ENCODE measurements at regions of chr9 and their contacts with region 1.

Region 1: DNA sequence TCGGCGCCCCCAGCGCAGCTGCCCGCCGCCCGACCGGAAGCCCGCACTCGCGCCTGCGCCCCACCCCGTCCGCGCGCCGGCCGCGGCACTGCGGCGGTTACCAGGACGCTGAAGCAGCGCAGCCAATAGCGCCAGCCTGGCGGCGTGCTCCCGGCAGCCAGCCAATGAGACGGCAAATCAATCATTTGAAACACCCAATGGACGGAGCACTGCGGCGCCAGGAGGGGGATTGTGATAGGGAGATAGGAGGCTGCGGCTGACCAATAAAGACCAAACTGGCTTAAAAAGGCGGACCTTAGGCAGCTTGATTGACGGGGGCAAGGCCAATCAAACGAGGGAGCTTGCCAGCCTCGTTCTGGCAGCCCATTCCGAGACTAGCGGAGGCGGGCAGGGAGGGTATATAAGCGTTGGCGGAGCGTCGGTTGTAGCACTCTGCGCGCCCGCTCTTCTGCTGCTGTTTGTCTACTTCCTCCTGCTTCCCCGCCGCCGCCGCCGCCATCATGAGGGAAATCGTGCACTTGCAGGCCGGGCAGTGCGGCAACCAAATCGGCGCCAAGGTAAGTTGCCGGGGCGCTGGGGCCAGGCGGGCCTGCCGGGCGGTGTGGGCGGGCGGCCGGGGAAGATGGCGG is at the start of gene TUBB4B:
- DNase-seq: peak; percentile 99
- H3K4me3 ChIP-seq: peak within 1 kb of the TSS; percentile 78
- CTCF ChIP-seq: no peak

Region 2: DNA sequence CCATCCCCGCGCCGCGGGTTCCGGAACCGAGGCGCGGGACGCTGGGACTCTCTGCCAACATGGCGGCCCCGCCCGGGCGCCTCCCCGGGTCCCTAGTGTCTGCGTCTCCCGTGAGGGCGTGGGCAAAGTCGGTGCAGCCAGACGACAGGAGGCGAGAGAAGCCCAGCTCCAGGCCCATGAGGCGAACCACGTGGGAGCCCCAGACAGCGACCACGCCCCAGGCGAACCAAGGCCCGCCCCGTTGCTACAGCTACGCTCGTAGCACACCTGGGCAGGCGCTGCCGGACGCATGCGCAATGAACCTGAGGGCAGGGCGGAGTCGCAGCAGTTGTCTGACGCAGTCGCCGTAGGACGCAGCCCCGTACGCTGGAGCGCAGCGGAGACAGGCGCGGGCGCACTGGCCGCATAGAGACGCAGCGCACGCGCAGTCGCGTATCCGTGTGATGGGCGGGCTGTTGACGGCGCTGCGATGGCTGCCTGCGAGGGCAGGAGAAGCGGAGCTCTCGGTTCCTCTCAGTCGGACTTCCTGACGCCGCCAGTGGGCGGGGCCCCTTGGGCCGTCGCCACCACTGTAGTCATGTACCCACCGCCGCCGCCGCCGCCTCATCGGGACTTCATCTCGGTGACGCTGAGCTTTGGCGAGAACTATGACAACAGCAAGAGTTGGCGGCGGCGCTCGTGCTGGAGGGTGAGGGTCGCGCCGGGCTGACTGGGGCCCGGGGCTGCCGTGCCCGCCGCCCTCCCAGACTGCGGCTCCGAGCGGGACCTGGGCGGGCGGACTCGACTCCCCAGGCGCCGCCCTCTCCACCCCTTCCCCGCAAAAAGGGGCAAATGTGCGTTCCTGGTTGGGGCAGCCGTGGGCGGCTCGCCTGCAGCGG is 154.2 kb before region 1 on chr9 and contains the start of gene MAN1B1:
- CTCF ChIA-PET with region 1: interaction called, 6 read pairs
- POLR2A ChIA-PET with region 1: interaction called, 17 read pairs
- DNase-seq: peak; percentile 85
- H3K4me3 ChIP-seq: peak within 1 kb of the TSS; percentile 78
- CTCF ChIP-seq: no peak

Region 3: GRCh38 chr9:137129456-137130175 is 111.4 kb before region 1 on chr9:
- CTCF ChIA-PET with region 1: interaction called, 17 read pairs
- POLR2A ChIA-PET with region 1: interaction called, 8 read pairs
- DNase-seq: peak; percentile 49
- H3K4me3 ChIP-seq: peak overlapping the region; percentile 81
- CTCF ChIP-seq: no peak

Region 4: GRCh38 chr9:137200311-137201204 is 40.4 kb before region 1 on chr9 and contains the start of gene TPRN:
- CTCF ChIA-PET with region 1: interaction called, 10 read pairs
- POLR2A ChIA-PET with region 1: interaction called, 10 read pairs
- DNase-seq: peak; percentile 89
- H3K4me3 ChIP-seq: peak within 1 kb of the TSS; percentile 79
- CTCF ChIP-seq: no peak

Region 5: GRCh38 chr9:137254624-137255447 is 13.9 kb after region 1 on chr9 and contains the start of gene NELFB:
- CTCF ChIA-PET with region 1: interaction called, 24 read pairs
- POLR2A ChIA-PET with region 1: interaction called, 164 read pairs
- DNase-seq: no peak
- H3K4me3 ChIP-seq: peak within 1 kb of the TSS; percentile 88
- CTCF ChIP-seq: no peak

Measured in AG04449 (cell line).